Activated T-helper 2 cell treated with anti-CD3 and anti-CD28 coated beads, Interferon-gamma antibody, Interleukin-2, Interleukin-4, amounts not matched to agents 10 μg/mL and 5 μg/mL and 100 μg/mL, durations not matched to agents 14 hours and 24 hours and 36 hours (primary cell): ENCODE measurements at regions of chr7 and their contacts with region 1.

Region 1: GRCh38 chr7:108497082-108497725 is 28.7 kb downstream of the PNPLA8 start:
- DNase-seq: no peak
- H3K4me3 Mint-ChIP-seq: no peak overlapping the region
- H3K27ac Mint-ChIP-seq: no peak overlapping the region
- H3K4me1 Mint-ChIP-seq: no peaks in the 10 kb centered on the region
- H3K27me3 Mint-ChIP-seq: no peaks in the 10 kb centered on the region

Region 2: GRCh38 chr7:107917763-107918651 is 579.2 kb before region 1 on chr7:
- intact Hi-C with region 1: no loop called
- DNase-seq: no peak
- H3K4me3 Mint-ChIP-seq: no peak overlapping the region
- H3K27ac Mint-ChIP-seq: no peak overlapping the region
- H3K4me1 Mint-ChIP-seq: peaks cover 35% of the 10 kb centered on the region
- H3K27me3 Mint-ChIP-seq: no peaks in the 10 kb centered on the region

Region 3: GRCh38 chr7:108181073-108181985 is 315.9 kb before region 1 on chr7:
- intact Hi-C with region 1: loop called (anchors 1 kb)
- DNase-seq: no peak
- H3K4me3 Mint-ChIP-seq: no peak overlapping the region
- H3K27ac Mint-ChIP-seq: no peak overlapping the region
- H3K4me1 Mint-ChIP-seq: no peaks in the 10 kb centered on the region
- H3K27me3 Mint-ChIP-seq: peaks cover 5% of the 10 kb centered on the region

Region 4: DNA sequence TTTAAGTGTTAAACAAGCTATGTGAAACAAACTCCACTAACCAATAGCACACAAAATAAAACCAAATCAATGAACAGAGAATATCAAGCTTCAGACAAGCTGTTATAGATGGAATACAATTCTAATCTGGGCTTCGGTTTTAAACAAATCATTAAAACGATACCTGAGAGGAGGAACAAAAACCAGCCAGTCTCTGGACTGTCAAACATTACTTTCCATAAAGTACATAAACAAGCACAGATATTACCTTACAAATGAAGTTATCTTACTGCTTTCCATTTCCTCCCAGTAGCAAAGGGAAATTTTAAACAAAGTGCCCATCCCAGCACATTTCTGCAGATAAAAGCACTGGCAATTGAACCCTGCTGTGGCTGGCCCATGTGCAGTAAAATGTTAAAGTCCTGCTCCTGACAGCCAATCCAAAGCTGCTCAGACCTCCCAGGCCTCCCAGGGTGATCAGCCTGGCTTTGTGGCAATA is 169.0 kb before region 1 on chr7:
- intact Hi-C with region 1: no loop called
- DNase-seq: no peak
- H3K4me3 Mint-ChIP-seq: no peak overlapping the region
- H3K27ac Mint-ChIP-seq: no peak overlapping the region
- H3K4me1 Mint-ChIP-seq: peaks cover 3% of the 10 kb centered on the region
- H3K27me3 Mint-ChIP-seq: peaks cover 2% of the 10 kb centered on the region

Region 5: DNA sequence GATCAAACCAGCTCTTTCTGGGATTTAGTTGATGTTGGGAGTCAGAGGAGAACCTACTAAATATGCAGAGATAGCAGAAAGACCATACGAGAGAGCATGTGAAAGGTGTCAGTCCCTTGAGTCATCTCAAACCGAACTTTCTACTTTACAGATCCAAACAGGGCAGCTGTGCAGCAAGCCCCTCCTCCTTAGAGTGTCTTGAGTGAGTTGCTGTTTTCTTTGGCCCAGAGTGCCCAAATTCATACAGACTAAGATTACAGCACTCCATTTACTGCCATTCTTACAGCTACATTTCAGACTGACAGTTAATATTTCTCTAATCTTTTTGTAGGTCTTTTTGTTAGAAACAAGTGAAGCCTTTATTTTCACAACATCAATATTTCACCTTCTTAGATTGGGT is 94.3 kb before region 1 on chr7:
- intact Hi-C with region 1: no loop called
- DNase-seq: no peak
- H3K4me3 Mint-ChIP-seq: no peak overlapping the region
- H3K27ac Mint-ChIP-seq: no peak overlapping the region
- H3K4me1 Mint-ChIP-seq: no peaks in the 10 kb centered on the region
- H3K27me3 Mint-ChIP-seq: no peaks in the 10 kb centered on the region

Region 6: DNA sequence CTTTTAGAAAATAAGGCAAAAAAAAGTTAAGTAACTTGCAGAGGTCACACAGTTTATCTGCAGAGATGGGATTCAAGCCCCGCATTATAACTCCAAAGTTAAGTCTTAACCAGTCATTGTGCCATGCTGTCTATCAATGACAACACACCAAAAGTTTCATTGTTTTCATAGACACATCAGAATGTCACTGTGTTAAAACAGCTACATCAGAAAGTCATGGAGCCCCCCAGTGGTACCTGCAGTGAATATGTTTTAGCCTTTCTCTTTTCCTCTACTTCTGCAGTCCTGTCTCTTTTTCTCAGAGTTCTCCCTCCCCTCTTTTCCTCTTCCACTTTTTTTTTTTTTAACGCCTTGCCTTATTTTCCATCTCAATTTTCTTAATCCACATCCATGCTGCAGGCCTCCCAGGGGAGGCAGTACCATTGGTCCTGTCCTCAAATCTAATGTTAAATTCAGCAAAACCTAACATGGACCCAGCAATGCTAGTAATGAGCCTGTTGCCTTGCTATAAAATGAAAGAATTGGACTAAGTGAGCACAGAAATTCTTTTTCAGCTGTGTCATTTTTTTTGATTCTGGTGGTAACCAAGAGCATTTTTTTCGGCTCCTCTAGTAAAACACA is 37.2 kb before region 1 on chr7:
- intact Hi-C with region 1: loop called (anchors 2 kb)
- DNase-seq: no peak
- H3K4me3 Mint-ChIP-seq: no peak overlapping the region
- H3K27ac Mint-ChIP-seq: no peak overlapping the region
- H3K4me1 Mint-ChIP-seq: peaks cover 13% of the 10 kb centered on the region
- H3K27me3 Mint-ChIP-seq: peaks cover 47% of the 10 kb centered on the region

Region 7: GRCh38 chr7:108515013-108515412 is 17.8 kb after region 1 on chr7:
- intact Hi-C with region 1: no loop called
- DNase-seq: no peak
- H3K4me3 Mint-ChIP-seq: no peak overlapping the region
- H3K27ac Mint-ChIP-seq: no peak overlapping the region
- H3K4me1 Mint-ChIP-seq: peaks cover 6% of the 10 kb centered on the region
- H3K27me3 Mint-ChIP-seq: no peaks in the 10 kb centered on the region